PC-9 (cell line): ENCODE measurements at regions of chr15 and their contacts with region 1.

Region 1: DNA sequence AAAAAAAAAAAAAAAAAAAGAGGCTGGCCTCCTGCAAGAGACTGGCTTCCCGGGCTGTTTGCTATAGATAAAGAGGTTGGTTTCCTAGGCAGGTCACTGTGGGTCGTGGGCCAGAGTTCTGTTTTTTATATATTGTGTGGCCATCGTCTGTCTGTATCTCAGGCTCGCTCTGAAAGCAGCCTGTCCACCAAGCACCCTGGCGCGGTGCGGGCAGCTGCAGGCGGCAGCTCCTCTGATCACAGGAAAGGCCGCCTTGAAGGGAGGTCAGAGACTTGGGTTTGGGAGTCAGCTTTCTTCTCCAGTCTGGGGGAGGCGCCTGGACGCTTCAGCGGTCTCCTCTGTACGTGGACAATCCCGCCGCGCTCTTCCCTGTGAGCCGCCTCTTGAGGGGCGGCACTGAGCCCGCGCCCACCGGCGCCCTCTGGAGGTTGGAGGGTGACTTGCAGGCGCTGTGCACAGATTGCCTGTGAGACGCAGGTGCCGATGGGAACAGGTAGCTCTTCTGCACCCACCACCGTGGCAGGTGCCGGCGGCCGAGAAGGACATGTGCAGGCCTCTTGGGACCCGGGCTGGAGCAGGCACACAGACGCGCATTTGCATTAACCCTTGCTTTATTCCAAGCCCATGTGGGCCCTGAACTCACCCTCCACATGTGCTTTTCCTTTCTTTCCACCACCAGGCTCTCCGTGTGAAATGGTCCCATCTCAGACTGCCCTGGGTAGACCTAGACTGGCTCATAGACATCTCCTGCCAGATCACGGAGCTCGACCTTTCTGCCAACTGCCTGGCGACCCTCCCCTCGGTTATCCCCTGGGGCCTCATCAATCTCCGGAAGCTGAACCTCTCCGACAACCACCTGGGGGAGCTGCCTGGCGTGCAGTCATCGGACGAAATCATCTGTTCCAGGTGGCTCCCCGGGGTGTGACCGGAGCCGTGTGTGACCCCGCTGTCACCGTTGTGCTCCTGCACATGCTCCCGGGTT is 89.3 kb downstream of the LRRK1 start:
- DNase-seq: peak; percentile 72 to 88
- H3K4me3 ChIP-seq: peak overlapping the region; percentile 67
- H3K27ac ChIP-seq: no peak overlapping the region
- H3K4me1 ChIP-seq: 0 out of 2 replicates have a peak, but pooled peaks cover 4% of the 10 kb centered on the region
- H3K27me3 ChIP-seq: no peaks in the 10 kb centered on the region
- CTCF ChIP-seq: peak; percentile 97

Region 2: GRCh38 chr15:100349696-100350433 is 658.6 kb before region 1 on chr15:
- CTCF ChIA-PET with region 1: no interaction called
- POLR2A ChIA-PET with region 1: no interaction called
- intact Hi-C with region 1: loop called (anchors 1 kb)
- DNase-seq: peak; percentile 65 to 95
- H3K4me3 ChIP-seq: peak overlapping the region; percentile 63; the same call in 1 of the 2 replicates
- H3K27ac ChIP-seq: peak overlapping the region; percentile 51; the same call in 1 of the 2 replicates
- H3K4me1 ChIP-seq: 0 out of 2 replicates have a peak, but pooled peaks cover 12% of the 10 kb centered on the region
- H3K27me3 ChIP-seq: peaks cover 6% of the 10 kb centered on the region; the same call in 1 of the 2 replicates
- CTCF ChIP-seq: peak; percentile 76

Region 3: DNA sequence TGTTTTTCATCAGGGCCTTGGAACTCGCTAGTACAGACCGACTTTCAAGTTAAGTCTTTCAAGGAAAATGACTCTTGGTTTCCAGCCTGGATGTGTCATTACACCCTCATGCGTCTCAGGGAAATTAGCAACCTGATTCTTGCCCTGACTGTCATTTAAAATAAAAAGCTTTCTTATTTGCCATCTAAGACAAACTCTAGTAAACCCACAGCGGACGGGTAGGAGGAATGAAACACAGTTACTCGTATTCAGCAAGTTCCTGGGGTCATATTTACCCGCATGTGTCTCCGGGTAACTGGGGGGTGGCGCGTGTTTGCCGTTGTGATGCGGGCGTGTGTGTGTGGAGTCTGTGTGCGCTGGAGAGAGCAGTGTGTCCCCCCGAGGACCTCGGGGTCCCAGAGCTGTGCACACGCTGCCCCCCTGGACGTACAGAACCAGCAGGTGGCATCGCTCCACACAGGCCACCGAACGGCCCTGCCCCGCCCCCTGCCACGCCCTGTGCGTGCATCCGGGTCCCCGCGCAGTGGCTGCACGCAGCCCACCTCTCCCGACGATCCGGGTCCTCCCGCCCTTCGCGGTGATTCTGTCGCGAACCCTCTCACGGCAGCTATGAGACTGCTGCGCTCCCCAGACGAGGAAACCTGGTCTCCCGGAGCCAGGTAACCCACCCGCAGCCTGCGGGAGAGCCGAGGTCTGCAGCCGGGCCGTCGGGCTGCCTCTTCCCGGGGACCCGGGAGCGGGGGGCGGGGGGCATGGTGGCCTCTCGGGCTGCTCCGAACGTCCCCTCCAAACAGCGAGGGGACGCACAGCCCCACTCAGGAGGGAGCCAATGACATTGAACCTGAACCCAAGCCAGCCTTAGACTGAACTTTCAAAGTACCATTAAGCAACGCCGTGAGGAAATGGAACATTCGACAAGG is 158.9 kb before region 1 on chr15:
- CTCF ChIA-PET with region 1: no interaction called
- POLR2A ChIA-PET with region 1: no interaction called
- intact Hi-C with region 1: loop called (anchors 1 kb)
- DNase-seq: peak; percentile 75 to 88
- H3K4me3 ChIP-seq: peak overlapping the region; percentile 96
- H3K27ac ChIP-seq: peak overlapping the region; percentile 99
- H3K4me1 ChIP-seq: peaks cover 45% of the 10 kb centered on the region
- H3K27me3 ChIP-seq: no peaks in the 10 kb centered on the region
- CTCF ChIP-seq: peak; percentile 56; the same call in 1 of the 2 replicates

Region 4: DNA sequence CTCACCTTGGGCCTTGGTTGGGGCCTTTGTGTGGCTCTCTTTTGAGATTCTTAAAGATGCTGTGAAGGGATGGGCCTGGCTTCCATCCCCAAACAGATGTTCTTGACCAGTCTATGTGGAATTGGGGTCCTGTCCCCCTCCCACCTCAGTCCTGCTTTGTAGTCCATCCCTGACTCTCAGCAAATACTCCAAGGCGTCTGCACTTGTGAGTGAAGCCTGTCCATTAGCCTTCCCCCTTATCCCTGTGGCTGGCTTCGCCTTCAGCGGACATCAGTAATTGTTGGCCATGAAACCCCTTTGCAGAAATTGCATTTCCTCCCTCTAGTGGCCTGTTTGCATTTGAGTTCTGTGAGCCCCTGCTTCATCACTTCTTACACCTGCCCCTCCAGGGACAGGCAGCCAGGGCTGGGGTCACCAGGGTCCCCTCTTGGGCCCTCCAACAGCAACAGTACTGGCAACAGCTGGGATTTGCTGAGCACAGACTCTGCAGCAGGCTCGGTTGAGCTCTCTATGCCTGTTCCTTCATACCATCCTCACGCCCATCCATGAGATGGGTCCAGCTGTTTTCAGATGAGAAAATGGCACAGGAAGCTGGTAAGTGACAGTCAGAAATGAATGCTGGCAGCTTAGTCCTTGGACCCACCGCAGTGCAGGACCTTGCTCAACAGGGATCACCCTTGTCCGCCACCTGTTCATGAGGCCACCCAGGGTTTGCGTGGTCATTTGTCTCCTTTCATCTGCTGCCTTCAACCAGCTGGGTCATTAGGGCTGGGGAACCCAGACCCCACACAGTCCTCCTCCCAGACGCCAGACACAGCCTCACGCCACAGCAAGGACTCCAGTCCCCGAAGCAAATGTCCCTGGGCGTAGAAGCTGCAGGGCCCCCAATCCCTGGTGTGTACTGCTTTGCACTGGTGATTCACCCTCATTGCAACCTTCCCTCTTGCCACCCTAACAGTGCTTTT is 98.2 kb before region 1 on chr15:
- CTCF ChIA-PET with region 1: interaction called, 12 read pairs
- POLR2A ChIA-PET with region 1: no interaction called
- intact Hi-C with region 1: no loop called
- DNase-seq: no peak
- H3K4me3 ChIP-seq: no peak overlapping the region
- H3K27ac ChIP-seq: no peak overlapping the region
- H3K4me1 ChIP-seq: no peaks in the 10 kb centered on the region
- H3K27me3 ChIP-seq: no peaks in the 10 kb centered on the region
- CTCF ChIP-seq: no peak; the same call in 1 of the 2 replicates

Region 5: DNA sequence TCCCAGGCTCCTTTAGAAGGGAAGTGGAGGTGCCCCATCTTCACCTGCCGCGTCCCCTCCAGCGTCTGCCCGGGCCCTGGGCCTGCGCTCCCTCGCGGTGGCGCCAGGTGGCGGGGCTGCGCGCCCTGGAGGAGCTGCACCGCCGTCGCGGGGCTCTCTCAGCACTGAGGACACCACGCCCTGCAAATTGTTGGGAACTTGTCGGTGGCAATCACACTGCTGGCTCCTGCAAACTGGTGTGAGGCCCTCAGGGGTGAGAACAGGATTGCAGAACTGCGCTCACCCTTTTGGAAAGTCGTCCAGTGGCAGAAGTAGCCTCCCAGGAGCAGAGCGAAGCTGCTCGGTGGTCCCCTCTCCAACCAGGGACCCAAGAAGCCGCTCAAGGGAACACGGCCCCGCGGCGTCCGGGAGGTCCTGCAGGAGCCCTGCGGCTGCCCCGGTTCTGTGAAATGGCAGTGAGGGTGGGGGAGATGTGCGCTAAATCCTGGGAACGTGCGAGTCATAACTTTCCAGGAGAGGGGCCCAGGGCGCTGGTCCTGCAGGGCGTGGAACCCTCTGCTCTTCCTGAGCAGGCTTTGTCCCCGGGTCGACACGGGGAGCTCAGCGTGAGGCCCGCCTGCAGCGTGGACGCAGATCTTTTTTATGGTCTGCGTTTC is 90.3 kb before region 1 on chr15:
- CTCF ChIA-PET with region 1: interaction called, 35 read pairs
- POLR2A ChIA-PET with region 1: no interaction called
- intact Hi-C with region 1: loop called (anchors 1 kb)
- DNase-seq: peak; percentile 80 to 89
- H3K4me3 ChIP-seq: peak overlapping the region; percentile 72
- H3K27ac ChIP-seq: no peak overlapping the region
- H3K4me1 ChIP-seq: no peaks in the 10 kb centered on the region
- H3K27me3 ChIP-seq: no peaks in the 10 kb centered on the region
- CTCF ChIP-seq: peak; percentile 85